HepG2 (cell line): ENCODE measurements at regions of chr10 and their contacts with region 1.

Region 1: DNA sequence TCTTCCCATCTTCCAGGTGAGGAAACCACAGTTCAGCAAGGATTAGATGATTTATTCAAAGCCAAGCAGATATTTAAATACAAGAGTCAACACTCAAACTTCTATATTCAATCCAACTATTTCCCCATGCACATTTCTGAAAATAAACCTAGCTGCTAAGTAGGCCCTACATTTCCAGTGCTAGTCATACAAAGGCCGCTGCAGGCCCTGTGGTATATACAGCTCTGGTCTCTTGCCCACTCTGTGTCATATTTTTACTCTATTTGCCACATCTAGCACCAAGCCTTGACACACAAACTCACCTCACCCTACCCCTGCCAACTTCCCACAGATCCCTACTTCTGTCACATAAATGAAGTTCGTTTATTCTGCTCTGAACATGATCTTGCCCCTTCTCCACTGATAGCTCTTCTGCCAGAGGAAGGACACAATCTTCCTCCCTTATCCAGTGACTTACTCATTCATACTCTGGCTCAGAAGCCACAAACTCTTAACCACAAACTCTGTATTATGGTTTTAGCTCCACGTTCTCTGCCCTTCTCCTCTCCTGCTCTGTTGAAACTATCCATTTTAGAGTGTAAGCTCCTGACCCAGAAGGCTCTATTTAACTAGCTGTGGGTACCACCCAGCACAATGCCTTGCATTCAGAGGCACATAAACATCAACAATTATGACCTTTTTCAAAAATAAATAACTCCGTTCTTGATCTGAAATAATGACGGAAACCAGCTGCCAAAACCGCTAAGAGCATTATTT is 180.7 kb downstream of the CPEB3 start:
- DNase-seq: no peak
- ATAC-seq: no peak
- H3K4me3 ChIP-seq: no peak overlapping the region
- H3K27ac ChIP-seq: no peak overlapping the region
- H3K4me1 ChIP-seq: peaks cover 68% of the 10 kb centered on the region
- H3K27me3 ChIP-seq: no peaks in the 10 kb centered on the region
- CTCF ChIP-seq: no peak
- EP300 ChIP-seq: no peak
- POLR2A ChIP-seq: no peak
- RAD21 ChIP-seq: no peak

Region 2: DNA sequence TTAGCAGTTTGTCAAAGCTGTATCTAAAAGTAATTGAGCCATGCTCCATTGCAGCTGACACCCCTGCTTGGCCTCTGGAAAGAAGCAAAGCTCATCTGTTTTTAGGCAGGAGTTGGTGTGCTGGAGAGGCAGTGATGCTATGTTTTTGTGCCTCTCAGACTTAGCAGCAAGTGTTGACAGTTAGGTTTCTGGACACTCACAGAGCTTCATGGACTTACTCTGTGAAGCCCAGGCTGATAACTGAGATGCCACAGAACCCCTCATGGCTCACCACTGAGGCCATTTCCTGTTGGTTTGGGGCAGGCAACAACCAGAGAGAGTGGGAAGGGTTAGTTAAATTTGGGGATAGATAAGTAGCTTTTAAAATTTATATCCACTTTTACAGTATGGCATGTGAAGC is 126.8 kb before region 1 on chr10:
- CTCF ChIA-PET with region 1: no interaction called
- POLR2A ChIA-PET with region 1: no interaction called
- in situ Hi-C with region 1: no loop called
- intact Hi-C with region 1: no loop called
- DNase-seq: no peak
- ATAC-seq: no peak
- H3K4me3 ChIP-seq: no peak overlapping the region
- H3K27ac ChIP-seq: no peak overlapping the region
- H3K4me1 ChIP-seq: no peaks in the 10 kb centered on the region
- H3K27me3 ChIP-seq: no peaks in the 10 kb centered on the region
- CTCF ChIP-seq: no peak
- EP300 ChIP-seq: no peak
- POLR2A ChIP-seq: no peak
- RAD21 ChIP-seq: no peak

Region 3: GRCh38 chr10:92124616-92125143 is 14.5 kb after region 1 on chr10:
- CTCF ChIA-PET with region 1: no interaction called
- POLR2A ChIA-PET with region 1: interaction called, 10 read pairs
- in situ Hi-C with region 1: no loop called
- intact Hi-C with region 1: no loop called
- DNase-seq: peak; percentile 73
- ATAC-seq: peak; percentile 53
- H3K4me3 ChIP-seq: peak overlapping the region in 2 of 3 experiments; percentile 23 to 38; a peak in 2 of 6 replicates
- H3K27ac ChIP-seq: peak overlapping the region; percentile 92
- H3K4me1 ChIP-seq: peaks cover 74% of the 10 kb centered on the region
- H3K27me3 ChIP-seq: no peaks in the 10 kb centered on the region
- CTCF ChIP-seq: peak; percentile 44
- EP300 ChIP-seq: no peak
- POLR2A ChIP-seq: no peak
- RAD21 ChIP-seq: 0 out of 2 replicates have a peak, but pooled peaks have one; percentile 22